Activated B cell treated with CpG ODN at 0.5 μM for 24 hours (primary cell): ENCODE measurements at regions of chr6 and their contacts with region 1.

Region 1: DNA sequence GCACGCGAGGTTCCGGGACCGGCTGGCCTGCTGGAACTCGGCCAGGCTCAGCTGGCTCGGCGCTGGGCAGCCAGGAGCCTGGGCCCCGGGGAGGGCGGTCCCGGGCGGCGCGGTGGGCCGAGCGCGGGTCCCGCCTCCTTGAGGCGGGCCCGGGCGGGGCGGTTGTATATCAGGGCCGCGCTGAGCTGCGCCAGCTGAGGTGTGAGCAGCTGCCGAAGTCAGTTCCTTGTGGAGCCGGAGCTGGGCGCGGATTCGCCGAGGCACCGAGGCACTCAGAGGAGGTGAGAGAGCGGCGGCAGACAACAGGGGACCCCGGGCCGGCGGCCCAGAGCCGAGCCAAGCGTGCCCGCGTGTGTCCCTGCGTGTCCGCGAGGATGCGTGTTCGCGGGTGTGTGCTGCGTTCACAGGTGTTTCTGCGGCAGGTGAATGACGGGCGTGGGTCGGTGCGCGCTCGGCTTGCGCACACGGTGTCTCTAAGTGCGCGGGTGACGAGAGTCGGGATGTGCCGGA is at the start of gene CDKN1A:
- DNase-seq: peak; percentile 80
- ATAC-seq: peak; percentile 54
- H3K4me3 Mint-ChIP-seq: peak within 1 kb of the TSS; percentile 94
- H3K27ac Mint-ChIP-seq: peak within 1 kb of the TSS; percentile 94
- H3K4me1 Mint-ChIP-seq: peaks cover 44% of the 10 kb centered on the region
- H3K27me3 Mint-ChIP-seq: no peaks in the 10 kb centered on the region
- CTCF ChIP-seq: no peak
- total RNA-seq, gene CDKN1A: 46.9 and 50.4 TPM in 2 replicates

Region 2: GRCh38 chr6:36027501-36028087 is 651.0 kb before region 1 on chr6 and contains the start of gene MAPK14:
- CTCF ChIA-PET with region 1: no interaction called
- POLR2A ChIA-PET with region 1: no interaction called
- intact Hi-C with region 1: loop called (anchors 2 kb)
- DNase-seq: peak; percentile 92
- ATAC-seq: peak; percentile 91
- H3K4me3 Mint-ChIP-seq: peak within 1 kb of the TSS; percentile 92
- H3K27ac Mint-ChIP-seq: peak within 1 kb of the TSS; percentile 95
- H3K4me1 Mint-ChIP-seq: peaks cover 40% of the 10 kb centered on the region
- H3K27me3 Mint-ChIP-seq: peaks cover 16% of the 10 kb centered on the region
- CTCF ChIP-seq: no peak
- total RNA-seq, gene MAPK14: 39.7 and 45.4 TPM in 2 replicates

Region 3: DNA sequence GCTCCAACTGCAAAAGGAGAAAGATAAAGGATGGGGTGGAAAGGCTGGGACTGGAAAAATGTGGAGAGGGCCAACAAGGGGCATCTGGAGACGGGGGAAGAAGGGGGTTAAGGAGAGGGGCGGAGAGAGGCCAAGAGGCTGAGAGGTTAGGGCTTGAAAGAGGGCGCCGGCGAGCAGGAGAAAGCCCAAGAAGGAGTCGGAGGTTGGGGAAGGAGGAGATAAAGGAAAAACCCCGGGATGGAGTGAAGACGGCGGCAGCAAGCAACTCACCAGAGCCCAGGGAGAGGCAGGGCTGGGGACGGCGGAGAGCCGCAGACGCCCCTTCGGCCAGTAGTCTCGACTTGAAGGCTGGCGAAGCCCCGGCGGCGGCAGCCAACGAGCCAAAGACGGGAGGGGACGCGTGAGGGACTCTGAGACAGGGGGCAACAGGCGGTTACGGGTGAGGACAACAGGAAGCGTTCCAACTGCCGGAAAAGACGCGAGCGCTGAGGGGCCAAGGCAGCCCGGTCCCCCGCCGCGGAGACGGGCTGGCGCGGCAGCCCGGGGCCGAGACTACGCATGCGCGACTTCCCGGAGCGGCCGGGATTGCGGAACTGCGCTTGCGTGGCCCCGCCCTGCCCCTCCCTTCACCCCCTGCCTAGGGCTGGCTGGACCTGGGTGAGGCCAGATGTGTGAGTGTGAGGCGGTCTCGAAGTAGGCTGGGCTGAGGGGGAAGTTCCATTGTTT is 131.5 kb before region 1 on chr6 and contains the start of gene STK38:
- CTCF ChIA-PET with region 1: no interaction called
- POLR2A ChIA-PET with region 1: interaction called, 6 read pairs
- intact Hi-C with region 1: loop called (anchors 1 kb)
- DNase-seq: peak; percentile 84
- ATAC-seq: peak; percentile 86
- H3K4me3 Mint-ChIP-seq: peak within 1 kb of the TSS; percentile 98
- H3K27ac Mint-ChIP-seq: peak within 1 kb of the TSS; percentile 96
- H3K4me1 Mint-ChIP-seq: peaks cover 65% of the 10 kb centered on the region
- H3K27me3 Mint-ChIP-seq: no peaks in the 10 kb centered on the region
- CTCF ChIP-seq: no peak
- total RNA-seq, gene STK38: 23.2 and 26.1 TPM in 2 replicates

Region 4: DNA sequence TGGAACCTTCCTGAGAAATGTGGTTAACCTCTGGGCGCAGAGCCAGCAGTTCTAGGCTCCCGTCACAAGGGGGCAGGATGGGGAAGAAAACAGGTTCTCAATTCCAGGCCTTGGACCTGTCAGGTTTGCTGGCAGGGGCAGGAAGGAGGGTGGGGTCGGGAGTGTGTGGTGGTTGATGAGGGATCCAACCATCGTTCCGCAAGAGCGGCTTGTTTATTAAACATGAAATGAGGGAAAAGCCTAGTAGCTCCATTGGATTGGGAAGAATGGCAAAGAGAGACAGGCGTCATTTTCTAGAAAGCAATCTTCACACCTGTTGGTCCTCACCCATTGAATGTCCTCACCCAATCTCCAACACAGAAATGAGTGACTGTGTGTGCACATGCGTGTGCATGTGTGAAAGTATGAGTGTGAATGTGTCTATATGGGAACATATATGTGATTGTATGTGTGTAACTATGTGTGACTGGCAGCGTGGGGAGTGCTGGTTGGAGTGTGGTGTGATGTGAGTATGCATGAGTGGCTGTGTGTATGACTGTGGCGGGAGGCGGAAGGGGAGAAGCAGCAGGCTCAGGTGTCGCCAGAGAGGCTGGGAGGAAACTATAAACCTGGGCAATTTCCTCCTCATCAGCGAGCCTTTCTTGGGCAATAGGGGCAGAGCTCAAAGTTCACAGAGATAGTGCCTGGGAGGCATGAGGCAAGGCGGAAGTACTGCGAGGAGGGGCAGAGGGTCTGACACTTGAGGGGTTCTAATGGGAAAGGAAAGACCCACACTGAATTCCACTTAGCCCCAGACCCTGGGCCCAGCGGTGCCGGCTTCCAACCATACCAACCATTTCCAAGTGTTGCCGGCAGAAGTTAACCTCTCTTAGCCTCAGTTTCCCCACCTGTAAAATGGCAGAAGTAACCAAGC is 54.8 kb before region 1 on chr6:
- CTCF ChIA-PET with region 1: interaction called, 17 read pairs
- POLR2A ChIA-PET with region 1: interaction called, 7 read pairs
- intact Hi-C with region 1: loop called (anchors 1 kb)
- DNase-seq: peak; percentile 64
- ATAC-seq: peak; percentile 90
- H3K4me3 Mint-ChIP-seq: no peak overlapping the region
- H3K27ac Mint-ChIP-seq: peak overlapping the region; percentile 47
- H3K4me1 Mint-ChIP-seq: peaks cover 29% of the 10 kb centered on the region
- H3K27me3 Mint-ChIP-seq: no peaks in the 10 kb centered on the region
- CTCF ChIP-seq: peak; percentile 51

Region 5: DNA sequence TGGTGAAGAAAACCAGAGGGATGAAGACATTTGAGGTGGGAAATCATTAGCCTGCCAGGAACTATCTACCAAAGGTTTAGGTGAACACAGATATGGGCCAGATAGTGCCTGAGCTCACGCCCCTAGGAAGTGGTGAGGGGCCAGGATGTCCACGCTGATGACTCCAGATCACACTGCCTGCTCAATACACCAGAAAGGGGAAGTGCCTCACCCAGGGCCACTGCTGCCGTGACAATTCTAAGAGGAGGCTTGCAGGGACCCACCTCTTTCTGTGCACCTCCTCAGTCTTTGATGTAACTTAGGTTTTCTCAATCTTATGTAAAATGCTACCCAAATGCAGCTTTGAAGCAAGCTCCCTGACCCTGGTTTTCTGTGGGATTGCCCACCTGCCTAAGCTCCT is 13.6 kb after region 1 on chr6:
- CTCF ChIA-PET with region 1: interaction called, 4 read pairs
- POLR2A ChIA-PET with region 1: interaction called, 88 read pairs
- intact Hi-C with region 1: loop called (anchors 1 kb)
- DNase-seq: no peak
- ATAC-seq: peak; percentile 98
- H3K4me3 Mint-ChIP-seq: peak overlapping the region; percentile 57
- H3K27ac Mint-ChIP-seq: peak overlapping the region; percentile 93
- H3K4me1 Mint-ChIP-seq: peaks cover 82% of the 10 kb centered on the region
- H3K27me3 Mint-ChIP-seq: no peaks in the 10 kb centered on the region
- CTCF ChIP-seq: no peak

Region 6: DNA sequence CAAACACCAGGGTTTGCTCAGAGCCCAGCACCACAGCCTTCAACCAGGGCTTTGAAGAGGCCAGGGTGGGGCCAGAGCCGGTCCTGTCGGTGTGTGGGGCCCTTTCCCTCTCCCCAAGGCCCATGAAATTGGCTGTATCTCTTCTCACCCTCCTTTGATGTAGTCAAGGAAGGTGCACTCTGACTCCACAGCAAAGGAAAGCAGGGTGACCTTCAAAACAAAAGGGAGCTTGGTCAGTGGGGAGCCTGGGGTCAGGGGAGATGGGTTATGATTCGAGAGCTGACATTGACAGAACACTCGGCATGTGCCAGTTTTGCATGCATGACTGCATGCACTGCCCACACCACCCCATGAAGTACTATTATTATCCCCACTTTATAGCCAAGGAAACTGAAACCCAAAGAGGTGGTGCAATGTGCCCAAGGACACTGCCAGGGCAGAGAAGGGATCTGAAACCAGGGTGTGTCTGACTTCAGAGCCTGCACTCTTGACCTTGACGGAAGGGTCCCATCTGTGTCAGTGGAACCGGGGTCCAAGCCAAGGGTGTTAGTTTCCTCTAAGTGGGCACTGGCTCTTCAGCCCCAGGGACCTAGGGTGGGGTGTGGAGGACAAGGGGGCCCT is 74.4 kb after region 1 on chr6:
- CTCF ChIA-PET with region 1: interaction called, 44 read pairs
- POLR2A ChIA-PET with region 1: interaction called, 226 read pairs
- intact Hi-C with region 1: loop called (anchors 1 kb)
- DNase-seq: no peak
- ATAC-seq: peak; percentile 49
- H3K4me3 Mint-ChIP-seq: peak overlapping the region; percentile 73
- H3K27ac Mint-ChIP-seq: peak overlapping the region; percentile 97
- H3K4me1 Mint-ChIP-seq: peaks cover 92% of the 10 kb centered on the region
- H3K27me3 Mint-ChIP-seq: no peaks in the 10 kb centered on the region
- CTCF ChIP-seq: no peak

Region 7: GRCh38 chr6:37005061-37005810 is 326.7 kb after region 1 on chr6 and contains the start of gene FGD2:
- CTCF ChIA-PET with region 1: no interaction called
- POLR2A ChIA-PET with region 1: interaction called, 6 read pairs
- intact Hi-C with region 1: loop called (anchors 1 kb)
- DNase-seq: peak; percentile 75
- ATAC-seq: peak; percentile 73
- H3K4me3 Mint-ChIP-seq: peak within 1 kb of the TSS; percentile 100
- H3K27ac Mint-ChIP-seq: peak within 1 kb of the TSS; percentile 92
- H3K4me1 Mint-ChIP-seq: peaks cover 84% of the 10 kb centered on the region
- H3K27me3 Mint-ChIP-seq: no peaks in the 10 kb centered on the region
- CTCF ChIP-seq: no peak
- total RNA-seq, gene FGD2: 362 and 435 TPM in 2 replicates